Left colon (tissue), 2 donors: ENCODE measurements at regions of chr2 and their contacts with region 1.

Region 1: DNA sequence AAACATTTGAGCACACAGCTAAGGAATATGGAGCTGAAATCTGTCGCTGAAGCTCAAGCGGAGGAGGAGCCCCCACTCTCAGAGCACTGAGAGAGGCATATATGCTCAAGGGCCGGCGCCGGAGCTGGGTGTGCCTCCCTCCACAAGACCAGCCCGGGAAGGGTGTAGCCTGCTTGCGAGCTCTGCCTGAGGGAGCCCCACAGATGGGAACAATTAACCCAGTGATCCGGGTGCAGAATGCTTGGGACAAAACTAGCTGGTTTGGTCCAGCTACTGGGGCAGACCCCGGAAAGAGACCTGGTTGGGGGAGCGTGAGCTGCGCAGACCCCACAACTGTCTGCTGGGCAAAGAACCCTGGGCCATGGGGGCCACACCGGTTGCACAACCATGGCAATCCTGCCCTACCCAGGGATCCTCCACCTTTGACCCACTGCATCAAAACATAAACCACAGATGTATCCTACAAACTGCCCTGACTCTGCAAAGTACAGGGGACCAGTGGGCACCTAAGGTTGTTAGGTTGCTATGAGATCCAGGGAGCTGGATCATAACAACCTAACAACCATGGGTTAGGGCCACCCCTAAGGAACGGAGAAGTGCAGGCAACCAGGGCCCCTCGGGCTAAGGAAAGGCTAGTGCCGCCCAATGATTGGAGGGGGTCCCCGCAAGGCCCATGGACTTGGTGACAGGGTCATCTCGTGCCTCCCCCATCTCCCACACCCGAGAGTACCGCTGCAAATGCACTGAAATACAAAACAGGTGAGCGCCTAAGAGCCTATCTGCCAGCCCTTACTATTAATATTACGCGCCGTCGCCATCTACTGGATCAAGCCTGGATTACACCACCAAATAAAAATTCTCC is 53.4 kb upstream of the SCN1A start:
- DNase-seq: peak in 1 of 2 donors; percentile 52
- ATAC-seq: peak; percentile 73

Region 2: GRCh38 chr2:166404831-166405568 is 223.8 kb after region 1 on chr2:
- intact Hi-C with region 1: loop called in 1 of 2 experiments (anchors 10 kb)
- DNase-seq: no peak
- ATAC-seq: no peak